Vagina (tissue), 2 donors: ENCODE measurements at regions of chr2 and their contacts with region 1.

Region 1: DNA sequence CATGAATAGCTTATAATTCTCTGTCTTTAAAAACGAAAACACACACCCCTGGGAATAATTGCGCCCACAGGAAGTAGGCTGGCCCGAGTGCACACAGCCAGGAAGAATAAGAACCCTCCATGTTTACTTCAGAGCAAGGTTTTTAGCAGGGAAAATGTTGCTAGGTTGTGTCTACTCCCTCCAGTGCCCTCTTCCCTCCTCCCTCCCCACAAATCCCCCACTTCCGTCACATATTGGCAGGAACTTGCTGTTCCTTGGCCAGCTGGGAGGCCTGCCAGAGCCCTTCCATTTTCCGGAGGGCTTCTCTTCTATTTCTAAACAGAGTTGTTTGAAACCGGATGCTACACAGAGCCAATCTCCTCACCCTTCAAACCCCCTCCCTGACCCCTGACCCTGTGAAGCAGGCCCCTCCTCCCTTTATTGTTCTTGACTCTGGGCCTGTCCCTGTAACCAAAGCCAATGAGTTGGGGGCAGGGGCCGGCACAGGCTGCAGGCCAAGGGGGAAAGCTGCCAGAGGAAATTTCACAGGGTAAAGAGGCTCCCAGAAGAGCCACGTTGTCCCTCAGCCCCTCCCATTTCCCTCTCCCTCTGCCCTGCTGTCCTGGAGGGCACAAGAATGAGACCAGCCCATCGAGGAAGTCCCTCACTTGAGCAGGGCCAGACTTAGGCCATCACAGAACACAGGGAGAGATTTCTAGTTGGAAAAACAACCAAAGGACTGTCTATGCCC is 49.8 kb upstream of the LGALSL start:
- DNase-seq: peak in 1 of 2 donors; percentile 92
- H3K4me3 ChIP-seq: peak overlapping the region in 1 of 2 donors; percentile 4
- H3K27ac ChIP-seq: peak overlapping the region; percentile 77
- H3K4me1 ChIP-seq: peaks cover 40% of the 10 kb centered on the region
- H3K27me3 ChIP-seq: no peaks in the 10 kb centered on the region
- CTCF ChIP-seq: no peak
- POLR2A ChIP-seq: no peak

Region 2: DNA sequence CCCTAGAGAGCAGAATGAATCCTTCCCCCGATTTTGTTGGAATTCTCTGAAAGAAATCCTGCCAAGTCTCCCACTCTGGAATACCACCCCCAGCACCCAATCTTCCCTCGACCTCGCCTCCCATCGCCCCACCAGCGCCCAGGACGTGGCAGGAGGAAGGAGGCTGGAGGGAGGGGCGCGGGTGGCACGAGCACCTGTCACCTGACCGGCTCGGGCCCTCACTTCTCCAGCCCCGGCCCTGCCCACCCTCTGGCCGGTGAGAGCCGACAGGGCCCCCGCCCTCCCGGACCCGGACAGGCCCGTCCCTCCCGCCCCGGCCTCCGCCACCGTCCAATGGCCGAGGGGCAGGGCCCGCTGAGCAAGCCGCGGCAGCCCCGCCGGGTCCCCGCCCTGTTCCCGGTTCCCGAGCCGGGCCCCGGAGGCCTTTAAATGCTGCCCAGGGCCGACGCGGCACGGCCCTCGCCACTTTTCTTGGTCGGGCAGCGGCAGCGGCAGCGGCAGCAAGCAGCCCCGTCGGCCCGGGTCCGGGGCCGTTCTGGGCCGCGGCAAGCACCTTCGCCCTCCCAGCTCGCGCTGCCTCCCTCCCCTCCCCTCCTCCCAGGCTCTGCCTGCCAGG is 49.7 kb after region 1 on chr2 and contains the start of gene LGALSL:
- intact Hi-C with region 1: loop called (anchors 10 kb)
- DNase-seq: no peak
- H3K4me3 ChIP-seq: peak within 1 kb of the TSS; percentile 74 to 92
- H3K27ac ChIP-seq: peak within 1 kb of the TSS; percentile 97
- H3K4me1 ChIP-seq: peaks cover 15% of the 10 kb centered on the region
- H3K27me3 ChIP-seq: no peaks in the 10 kb centered on the region
- CTCF ChIP-seq: no peak
- POLR2A ChIP-seq: peak in 1 of 2 donors; percentile 19
- total RNA-seq, gene LGALSL: 13.0 TPM